Right ventricle myocardium superior (tissue), 1 donor: ENCODE measurements at regions of chr1 and their contacts with region 1.

Region 1: DNA sequence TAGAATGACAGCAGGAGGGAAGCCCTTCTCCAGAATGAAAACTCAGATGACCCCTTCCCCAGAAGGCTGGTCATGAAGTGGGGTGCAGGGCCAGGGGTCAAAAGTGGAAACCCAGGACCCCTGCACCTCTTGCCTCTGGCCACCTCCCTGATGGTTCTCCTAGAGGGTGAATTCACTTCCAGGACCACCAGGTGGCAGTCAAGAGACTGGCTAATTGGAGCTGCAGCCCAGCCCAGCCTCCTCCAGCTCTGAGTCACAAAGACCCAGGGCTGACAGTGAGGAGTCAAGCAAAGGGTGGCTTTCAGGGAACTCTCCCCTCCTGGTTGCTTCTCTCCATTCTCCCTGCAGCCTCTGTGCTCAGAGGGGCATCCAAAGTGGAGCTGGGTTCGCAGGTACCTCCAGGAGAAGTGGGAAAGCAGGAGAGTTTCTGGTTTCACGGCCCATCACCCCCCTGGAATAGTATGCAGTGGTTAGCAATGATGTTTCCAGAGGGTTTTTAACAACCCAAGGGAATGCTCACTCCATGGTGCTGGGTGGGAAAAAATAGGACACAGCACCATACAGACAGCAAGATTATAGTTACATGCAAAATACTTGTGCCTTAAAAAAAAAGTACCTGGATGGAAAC is 6.1 kb upstream of the EPHB2 start:
- DNase-seq: peak; percentile 85
- ATAC-seq: peak; percentile 95

Region 2: DNA sequence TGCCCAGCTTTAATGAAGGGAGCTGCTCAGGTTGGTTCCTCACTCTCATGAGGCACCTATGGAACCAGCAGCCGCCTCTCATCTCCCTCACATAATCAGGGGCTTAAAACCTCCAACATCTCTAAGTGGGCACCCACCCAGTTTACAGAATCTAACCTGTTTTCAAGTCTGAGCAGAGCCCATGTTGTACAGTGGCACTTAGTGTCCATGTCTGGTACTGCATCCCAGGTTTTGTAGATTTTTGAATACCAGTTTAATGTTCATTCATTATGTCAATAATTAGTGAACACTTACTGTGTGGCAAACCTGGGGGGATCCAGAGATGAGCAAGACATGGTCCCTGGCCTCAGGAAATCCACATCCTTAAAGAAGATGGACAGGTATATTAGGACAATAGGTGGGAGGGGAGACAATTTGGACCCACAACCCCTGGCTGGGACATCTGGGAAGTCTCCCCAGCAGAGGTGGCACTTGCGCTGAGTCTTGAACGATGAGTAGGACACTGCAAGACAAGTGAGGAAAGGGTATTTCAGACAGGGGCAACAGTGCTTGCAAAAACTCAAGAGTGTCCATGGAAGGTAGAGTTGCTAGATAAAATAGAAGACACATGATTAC is 184.8 kb after region 1 on chr1:
- intact Hi-C with region 1: loop called (anchors 5 kb)
- DNase-seq: no peak
- ATAC-seq: peak; percentile 71

Region 3: DNA sequence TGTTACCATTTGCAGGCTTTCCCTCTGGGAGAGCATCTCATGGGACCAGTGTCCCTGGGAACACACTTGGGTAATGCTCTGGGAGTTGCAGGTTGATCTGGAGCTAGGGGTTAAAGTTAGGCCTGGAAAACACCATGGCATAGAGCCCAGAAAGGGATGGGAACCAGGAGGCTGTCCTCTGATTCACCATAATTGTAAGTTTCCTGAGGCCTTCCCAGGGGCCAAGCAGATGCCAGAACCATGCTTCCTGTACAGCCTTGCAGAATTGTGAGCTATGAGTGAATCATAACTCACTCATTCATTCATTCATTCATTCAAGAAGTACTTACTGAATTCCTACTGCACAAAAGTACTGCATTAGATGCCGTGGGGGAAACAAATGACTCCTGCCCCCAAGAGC is 218.1 kb after region 1 on chr1:
- intact Hi-C with region 1: loop called (anchors 10 kb)
- DNase-seq: no peak
- ATAC-seq: no peak

Region 4: DNA sequence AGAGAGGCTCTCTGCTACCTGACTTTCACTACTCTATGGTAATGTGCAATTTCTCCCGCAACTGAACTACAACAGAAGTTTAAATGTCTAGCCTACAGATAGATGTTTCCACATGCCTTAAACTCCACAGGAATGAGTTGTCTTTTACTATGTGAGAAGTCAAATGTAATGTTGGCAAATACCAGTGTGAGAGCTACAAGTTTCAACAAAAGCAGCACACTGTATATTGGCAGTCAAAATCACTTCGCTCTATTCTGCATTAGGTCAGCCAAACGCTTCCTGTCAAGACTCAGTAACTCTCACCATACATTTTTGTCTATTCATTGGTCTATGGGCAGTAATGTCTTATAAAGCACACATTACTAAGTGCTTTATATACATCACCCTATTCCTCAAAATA is 422.2 kb after region 1 on chr1:
- intact Hi-C with region 1: no loop called
- DNase-seq: no peak
- ATAC-seq: no peak